ENCODE measurements at regions of chr17 and their contacts with region 1.

Region 1: DNA sequence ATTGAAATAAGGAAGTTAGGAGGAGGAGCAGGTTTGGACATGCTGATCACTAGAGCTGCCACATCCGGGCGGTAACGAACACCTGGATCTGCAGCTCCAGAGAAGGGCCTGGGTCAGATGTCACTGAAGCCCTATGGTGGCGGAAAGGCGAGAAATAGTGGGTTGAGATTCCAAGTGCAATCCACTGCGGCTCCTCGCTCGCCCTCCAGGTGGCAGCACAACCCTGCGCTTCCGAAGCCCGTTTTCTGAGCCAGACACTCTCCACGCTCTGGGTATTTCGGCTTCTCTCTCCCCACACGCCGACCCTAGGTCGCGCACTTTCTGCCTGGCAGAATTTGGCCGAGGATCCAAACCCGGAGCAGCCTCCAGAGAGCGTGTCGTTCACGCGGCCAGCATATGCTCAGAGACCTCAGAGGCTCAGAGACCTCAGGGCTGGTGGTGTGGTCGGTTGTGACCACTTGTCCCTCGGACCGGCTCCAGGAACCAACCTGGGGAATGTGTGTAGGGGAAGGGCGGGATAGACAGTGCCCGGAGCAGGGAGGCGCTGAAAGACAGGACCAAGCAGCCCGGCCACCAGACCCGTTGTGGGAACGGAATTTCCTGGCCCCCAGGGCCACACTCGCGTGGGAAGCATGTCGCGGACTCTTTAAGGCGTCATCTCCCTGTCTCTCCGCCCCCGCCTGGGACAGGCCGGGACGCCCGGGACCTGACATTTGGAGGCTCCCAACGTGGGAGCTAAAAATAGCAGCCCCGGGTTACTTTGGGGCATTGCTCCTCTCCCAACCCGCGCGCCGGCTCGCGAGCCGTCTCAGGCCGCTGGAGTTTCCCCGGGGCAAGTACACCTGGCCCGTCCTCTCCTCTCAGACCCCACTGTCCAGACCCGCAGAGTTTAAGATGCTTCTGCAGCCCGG is 744 bp upstream of the SLC2A4 start:
- DNase-seq: peak; percentile 79
- ATAC-seq: peak; percentile 72
- H3K4me3 ChIP-seq: peak overlapping the region; percentile 23 to 87 (median 31); a peak in 5 of 6 replicates
- H3K27ac ChIP-seq: peak overlapping the region; percentile 59
- H3K4me1 ChIP-seq: peaks cover 38% of the 10 kb centered on the region
- H3K27me3 ChIP-seq: no peaks in the 10 kb centered on the region
- CTCF ChIP-seq: peak; percentile 98
- EP300 ChIP-seq: no peak
- POLR2A ChIP-seq: no peak
- RAD21 ChIP-seq: peak; percentile 99

Region 2: DNA sequence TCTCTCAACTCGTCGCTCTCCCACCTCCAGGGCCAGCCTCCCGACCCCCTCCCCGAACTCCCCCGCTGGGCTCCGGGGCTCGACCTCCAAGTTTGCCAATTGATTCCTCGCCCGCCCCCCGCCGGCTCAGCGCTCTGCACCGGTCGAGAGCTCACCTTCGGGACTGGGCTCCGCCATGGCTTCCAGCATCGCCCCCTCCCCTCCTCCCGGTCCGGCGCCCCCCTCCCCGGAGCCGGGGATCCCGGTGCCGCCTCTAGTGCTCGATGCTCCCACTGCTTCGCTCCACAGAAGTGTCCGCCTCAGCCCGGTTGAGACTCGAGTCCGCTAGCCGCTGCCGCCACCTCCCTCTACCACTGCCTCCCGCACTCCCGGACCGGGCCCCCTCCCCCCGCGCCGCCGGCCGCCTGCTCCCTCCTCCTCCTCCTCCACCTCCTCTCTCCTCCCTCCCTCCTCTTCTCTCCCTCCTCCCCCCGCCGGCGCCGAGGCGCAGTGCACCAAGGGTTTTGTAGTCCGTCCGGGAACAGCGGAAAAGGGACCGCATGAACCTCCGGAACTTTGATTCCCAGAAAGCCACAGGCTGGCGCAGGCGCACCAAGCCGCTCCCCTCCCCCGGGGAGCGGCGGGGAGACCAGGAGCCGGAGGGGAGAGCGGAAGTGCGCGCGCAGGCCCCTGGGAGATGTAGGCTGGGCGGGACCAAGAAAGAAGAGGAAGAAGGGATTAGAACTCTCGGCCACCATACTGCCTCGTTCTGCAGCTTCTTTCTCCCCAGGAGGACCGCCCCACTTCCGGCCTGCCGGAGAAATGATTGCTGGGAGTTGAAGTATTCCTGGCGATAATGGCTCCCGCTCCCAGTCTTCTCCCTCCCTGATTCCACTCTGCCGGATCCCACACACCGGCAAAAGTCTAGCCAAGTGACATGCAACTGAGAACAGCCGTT is 41.4 kb before region 1 on chr17 and contains the start of gene PHF23:
- CTCF ChIA-PET with region 1: no interaction called
- POLR2A ChIA-PET with region 1: interaction called, 5 read pairs
- in situ Hi-C with region 1: no loop called
- intact Hi-C with region 1: loop called (anchors 5 kb)
- DNase-seq: peak; percentile 97
- ATAC-seq: peak; percentile 66
- H3K4me3 ChIP-seq: peak within 1 kb of the TSS; percentile 97 to 98 (median 98)
- H3K27ac ChIP-seq: peak within 1 kb of the TSS; percentile 88
- H3K4me1 ChIP-seq: peaks cover 54% of the 10 kb centered on the region
- H3K27me3 ChIP-seq: no peaks in the 10 kb centered on the region; a peak in 1 of 5 replicates
- CTCF ChIP-seq: no peak
- EP300 ChIP-seq: 0 out of 4 replicates have a peak, but pooled peaks of 1 of the 2 experiments have one; percentile 28
- POLR2A ChIP-seq: peak; percentile 51 to 69; a peak in 3 of 4 replicates
- RAD21 ChIP-seq: 0 out of 2 replicates have a peak, but pooled peaks have one; percentile 9
- total RNA-seq, gene PHF23: 33.2 and 37.5 TPM in 2 replicates

Region 3: GRCh38 chr17:7263083-7264078 is 17.4 kb before region 1 on chr17:
- CTCF ChIA-PET with region 1: no interaction called
- POLR2A ChIA-PET with region 1: interaction called, 18 read pairs
- in situ Hi-C with region 1: no loop called
- intact Hi-C with region 1: no loop called
- DNase-seq: no peak
- ATAC-seq: no peak
- H3K4me3 ChIP-seq: no peak overlapping the region
- H3K27ac ChIP-seq: peak overlapping the region; percentile 64
- H3K4me1 ChIP-seq: peaks cover 61% of the 10 kb centered on the region
- H3K27me3 ChIP-seq: no peaks in the 10 kb centered on the region
- CTCF ChIP-seq: no peak
- EP300 ChIP-seq: no peak
- POLR2A ChIP-seq: no peak
- RAD21 ChIP-seq: no peak

Region 4: GRCh38 chr17:7314719-7315569 is 34.2 kb after region 1 on chr17 and contains the start of gene GPS2:
- CTCF ChIA-PET with region 1: interaction called, 3 read pairs
- POLR2A ChIA-PET with region 1: interaction called, 15 read pairs
- in situ Hi-C with region 1: no loop called
- intact Hi-C with region 1: no loop called
- DNase-seq: peak; percentile 81
- ATAC-seq: peak; percentile 75
- H3K4me3 ChIP-seq: peak within 1 kb of the TSS; percentile 82 to 89 (median 82)
- H3K27ac ChIP-seq: peak within 1 kb of the TSS; percentile 60
- H3K4me1 ChIP-seq: peaks cover 40% of the 10 kb centered on the region
- H3K27me3 ChIP-seq: no peaks in the 10 kb centered on the region
- CTCF ChIP-seq: peak; percentile 26
- EP300 ChIP-seq: no peak
- POLR2A ChIP-seq: peak; percentile 69 to 93
- RAD21 ChIP-seq: peak; percentile 35; the same call in 1 of the 2 replicates
- total RNA-seq, gene GPS2: 43.8 and 58.0 TPM in 2 replicates

Region 5: GRCh38 chr17:7351665-7352501 is 71.1 kb after region 1 on chr17 and contains the start of gene KCTD11:
- CTCF ChIA-PET with region 1: no interaction called
- POLR2A ChIA-PET with region 1: interaction called, 9 read pairs
- in situ Hi-C with region 1: no loop called
- intact Hi-C with region 1: loop called (anchors 2 kb)
- DNase-seq: peak; percentile 73
- ATAC-seq: peak; percentile 76
- H3K4me3 ChIP-seq: peak within 1 kb of the TSS; percentile 64 to 88 (median 87)
- H3K27ac ChIP-seq: peak within 1 kb of the TSS; percentile 95
- H3K4me1 ChIP-seq: peaks cover 55% of the 10 kb centered on the region
- H3K27me3 ChIP-seq: peaks cover 0 to 5% of the 10 kb centered on the region in 2 experiments; a peak in 2 of 5 replicates
- CTCF ChIP-seq: peak; percentile 66
- EP300 ChIP-seq: no peak
- POLR2A ChIP-seq: peak in 1 of 2 experiments; percentile 84; a peak in 3 of 4 replicates
- RAD21 ChIP-seq: peak; percentile 58; the same call in 1 of the 2 replicates
- total RNA-seq, gene KCTD11: 1.3 and 1.6 TPM in 2 replicates